ENCODE measurements at regions of chr4 and their contacts with region 1.

Region 1: GRCh38 chr4:139167774-139168444 is 9.1 kb downstream of the ELF2 start:
- DNase-seq: no peak
- ATAC-seq: peak; percentile 74 to 82
- H3K4me3 ChIP-seq: no peak overlapping the region
- H3K27ac ChIP-seq: no peak overlapping the region
- H3K4me1 ChIP-seq: peaks cover 60% of the 10 kb centered on the region
- H3K27me3 ChIP-seq: no peaks in the 10 kb centered on the region
- CTCF ChIP-seq: peak; percentile 50

Region 2: DNA sequence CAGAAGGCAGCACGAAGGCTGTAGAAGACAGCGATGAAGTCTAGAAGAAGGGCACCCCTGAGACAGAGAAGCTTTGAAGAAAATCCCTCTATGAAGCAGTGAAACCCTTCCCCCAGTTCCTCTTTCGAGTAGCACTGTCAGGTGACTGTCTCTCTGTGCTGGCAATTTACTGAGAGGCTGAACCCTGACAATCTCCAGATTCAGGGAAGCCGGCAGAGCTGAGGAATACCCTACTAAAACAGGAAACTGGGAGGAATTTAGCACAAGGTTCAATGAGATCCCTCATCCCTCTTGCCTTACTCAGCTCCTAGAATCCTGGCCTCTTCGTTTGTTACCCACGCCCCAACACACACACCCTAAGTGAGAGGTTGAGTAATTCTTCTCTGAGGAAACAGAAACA is 392.0 kb before region 1 on chr4:
- intact Hi-C with region 1: no loop called
- DNase-seq: no peak
- ATAC-seq: peak in 1 of 2 donors; percentile 35
- H3K4me3 ChIP-seq: no peak overlapping the region
- H3K27ac ChIP-seq: no peak overlapping the region
- H3K4me1 ChIP-seq: no peaks in the 10 kb centered on the region
- H3K27me3 ChIP-seq: no peaks in the 10 kb centered on the region
- CTCF ChIP-seq: no peak

Region 3: GRCh38 chr4:139099366-139099982 is 68.4 kb before region 1 on chr4:
- intact Hi-C with region 1: loop called (anchors 5 kb)
- DNase-seq: no peak
- ATAC-seq: peak; percentile 88 to 92
- H3K4me3 ChIP-seq: no peak overlapping the region
- H3K27ac ChIP-seq: no peak overlapping the region
- H3K4me1 ChIP-seq: no peaks in the 10 kb centered on the region
- H3K27me3 ChIP-seq: no peaks in the 10 kb centered on the region
- CTCF ChIP-seq: peak; percentile 88

Region 4: GRCh38 chr4:139554893-139555704 is 387.2 kb after region 1 on chr4:
- intact Hi-C with region 1: no loop called
- DNase-seq: peak; percentile 89
- ATAC-seq: peak; percentile 83 to 85
- H3K4me3 ChIP-seq: peak overlapping the region; percentile 79
- H3K27ac ChIP-seq: peak overlapping the region; percentile 99
- H3K4me1 ChIP-seq: peaks cover 72% of the 10 kb centered on the region
- H3K27me3 ChIP-seq: no peaks in the 10 kb centered on the region
- CTCF ChIP-seq: no peak

Measured in lower lobe of right lung (tissue), 2 donors.